Naive thymus-derived CD4-positive, alpha-beta T cell (primary cell): ENCODE measurements at regions of chr4 and their contacts with region 1.

Region 1: DNA sequence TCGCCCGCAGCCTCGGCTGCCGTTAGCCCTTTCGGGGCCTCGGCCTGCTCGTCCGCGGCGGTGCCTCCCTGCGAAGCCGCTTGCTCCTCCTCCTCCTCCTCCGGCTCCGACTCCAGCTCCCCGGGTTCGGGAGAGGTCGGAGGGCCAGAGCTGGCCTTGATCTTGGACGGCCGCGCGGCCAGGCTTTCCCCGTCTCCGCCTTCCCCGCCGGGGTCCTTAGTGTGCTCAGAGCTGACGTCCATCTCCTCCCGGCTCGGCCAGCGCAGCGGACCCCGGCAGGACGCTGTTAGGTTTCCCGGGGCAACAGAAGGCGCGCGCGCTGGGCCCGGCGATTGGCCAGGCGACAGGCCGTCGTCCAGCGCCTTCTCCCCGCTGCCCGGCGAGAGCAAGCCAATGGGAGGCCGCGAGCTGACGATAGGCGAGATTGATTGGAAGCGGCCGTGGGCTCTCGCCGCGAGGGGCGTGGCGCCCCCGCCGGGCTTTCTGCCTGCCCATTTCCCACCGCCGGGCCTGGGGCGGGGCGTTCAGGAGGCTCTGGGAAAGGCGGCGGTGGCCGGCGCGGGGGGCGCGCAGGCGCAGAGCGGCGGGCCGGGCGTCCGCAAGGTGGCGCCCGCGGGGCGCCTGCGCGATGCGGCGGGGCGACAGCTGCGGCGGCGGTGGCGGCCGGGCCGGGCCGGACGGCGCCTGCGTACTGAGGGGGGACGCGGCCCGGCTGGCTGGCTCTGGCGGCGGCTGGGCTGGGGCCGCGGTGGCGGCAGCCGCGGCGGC is at the start of gene TADA2B:
- DNase-seq: peak; percentile 79 to 99 (median 88)
- ATAC-seq: peak; percentile 89
- H3K4me3 ChIP-seq: peak within 1 kb of the TSS; percentile 84
- H3K4me3 Mint-ChIP-seq: peak within 1 kb of the TSS; percentile 90 to 95 (median 92)
- H3K27ac ChIP-seq: peak within 1 kb of the TSS; percentile 85
- H3K27ac Mint-ChIP-seq: peak within 1 kb of the TSS; percentile 80 to 92 (median 89)
- H3K4me1 ChIP-seq: peaks cover 33 to 40% of the 10 kb centered on the region in 2 donors
- H3K4me1 Mint-ChIP-seq: peaks cover 38 to 58% (median 52%) of the 10 kb centered on the region in 7 donors
- H3K27me3 ChIP-seq: no peaks in the 10 kb centered on the region
- H3K27me3 Mint-ChIP-seq: peaks cover 0 to 15% (median 0%) of the 10 kb centered on the region in 5 donors
- total RNA-seq, gene TADA2B: 26.8 to 49.0 (median 41.5) TPM

Region 2: DNA sequence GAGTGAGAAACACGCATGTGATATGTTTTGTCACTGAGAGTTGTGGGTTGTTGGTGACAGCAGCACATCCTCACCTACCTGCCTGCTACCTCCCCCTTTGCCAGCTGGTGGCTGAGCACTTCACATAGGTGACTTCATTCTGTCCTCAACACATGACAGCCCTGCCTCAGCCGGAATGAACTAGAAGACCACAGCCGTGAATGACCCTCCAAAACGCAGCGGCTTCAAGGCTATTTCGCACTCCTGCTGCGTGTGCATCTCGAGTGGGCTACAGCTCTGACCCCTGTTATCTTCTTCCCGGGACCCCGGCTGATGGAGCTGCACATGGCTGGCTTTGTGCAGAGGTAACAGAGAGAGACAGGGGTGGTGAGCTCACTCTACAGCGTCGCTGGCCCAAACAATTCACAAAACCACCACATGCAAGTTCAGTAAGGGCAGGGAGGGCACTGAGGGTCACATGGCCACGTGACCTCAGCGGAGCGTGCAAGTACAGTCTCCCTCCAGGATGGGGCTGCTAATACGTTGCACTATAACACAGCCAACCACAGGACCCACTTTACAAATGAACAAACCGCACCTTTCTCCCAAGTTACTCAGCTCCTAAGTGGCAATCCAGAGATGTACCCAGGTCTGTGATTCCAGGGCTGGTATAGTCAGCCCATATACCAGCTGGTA is 564.2 kb before region 1 on chr4:
- CTCF ChIA-PET with region 1: no interaction called
- POLR2A ChIA-PET with region 1: no interaction called
- intact Hi-C with region 1: no loop called
- DNase-seq: no peak
- ATAC-seq: no peak
- H3K4me3 ChIP-seq: no peak overlapping the region
- H3K4me3 Mint-ChIP-seq: no peak overlapping the region
- H3K27ac ChIP-seq: no peak overlapping the region
- H3K27ac Mint-ChIP-seq: no peak overlapping the region
- H3K4me1 ChIP-seq: no peaks in the 10 kb centered on the region
- H3K4me1 Mint-ChIP-seq: no peaks in the 10 kb centered on the region
- H3K27me3 ChIP-seq: no peaks in the 10 kb centered on the region
- H3K27me3 Mint-ChIP-seq: peaks cover 25 to 57% (median 47%) of the 10 kb centered on the region in 5 donors

Region 3: DNA sequence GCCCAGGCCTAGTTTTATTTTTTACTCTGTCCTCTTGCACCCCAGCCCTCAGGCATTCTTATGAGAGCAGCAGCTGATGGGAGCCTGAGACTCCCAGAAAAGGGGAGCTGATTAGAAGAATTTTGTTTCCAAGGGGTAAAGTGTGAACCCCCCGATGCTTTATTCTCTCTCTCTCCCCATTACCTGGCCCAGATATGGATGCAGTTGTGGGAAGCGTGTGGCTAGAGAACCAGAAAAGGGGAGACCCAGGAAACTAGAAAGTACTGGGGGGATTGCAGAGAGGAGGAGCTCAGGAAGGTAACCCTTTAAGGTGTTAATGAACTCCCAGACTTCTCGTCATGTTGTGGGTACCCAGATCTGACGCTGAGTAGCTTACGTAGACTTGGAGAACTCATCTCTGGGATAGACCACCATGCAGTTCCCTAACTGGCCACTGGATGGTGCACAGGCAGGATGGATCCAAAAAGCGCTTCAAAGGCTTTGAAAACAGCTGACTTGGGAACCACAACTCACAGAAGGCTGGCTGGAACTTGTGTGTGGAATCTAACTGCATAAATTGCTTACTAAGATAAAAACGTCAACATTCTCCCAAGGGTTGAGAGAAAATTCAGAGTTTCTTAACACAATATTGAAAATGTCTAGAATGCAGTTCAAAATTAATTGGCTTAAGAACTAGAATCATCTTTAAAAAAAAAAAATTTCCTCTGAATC is 68.6 kb before region 1 on chr4:
- CTCF ChIA-PET with region 1: interaction called, 3 read pairs
- POLR2A ChIA-PET with region 1: no interaction called
- intact Hi-C with region 1: loop called in 1 of 2 experiments (anchors 1 kb)
- DNase-seq: peak; percentile 55 to 82 (median 74)
- ATAC-seq: peak; percentile 100
- H3K4me3 ChIP-seq: no peak overlapping the region
- H3K4me3 Mint-ChIP-seq: peak overlapping the region in 3 of 10 donors; percentile 11 to 45 (median 18)
- H3K27ac ChIP-seq: no peak overlapping the region
- H3K27ac Mint-ChIP-seq: peak overlapping the region in 5 of 9 donors; percentile 43 to 86 (median 69)
- H3K4me1 ChIP-seq: peaks cover 0 to 9% of the 10 kb centered on the region in 2 donors
- H3K4me1 Mint-ChIP-seq: peaks cover 5 to 38% (median 22%) of the 10 kb centered on the region in 7 donors
- H3K27me3 ChIP-seq: no peaks in the 10 kb centered on the region
- H3K27me3 Mint-ChIP-seq: no peaks in the 10 kb centered on the region

Region 4: DNA sequence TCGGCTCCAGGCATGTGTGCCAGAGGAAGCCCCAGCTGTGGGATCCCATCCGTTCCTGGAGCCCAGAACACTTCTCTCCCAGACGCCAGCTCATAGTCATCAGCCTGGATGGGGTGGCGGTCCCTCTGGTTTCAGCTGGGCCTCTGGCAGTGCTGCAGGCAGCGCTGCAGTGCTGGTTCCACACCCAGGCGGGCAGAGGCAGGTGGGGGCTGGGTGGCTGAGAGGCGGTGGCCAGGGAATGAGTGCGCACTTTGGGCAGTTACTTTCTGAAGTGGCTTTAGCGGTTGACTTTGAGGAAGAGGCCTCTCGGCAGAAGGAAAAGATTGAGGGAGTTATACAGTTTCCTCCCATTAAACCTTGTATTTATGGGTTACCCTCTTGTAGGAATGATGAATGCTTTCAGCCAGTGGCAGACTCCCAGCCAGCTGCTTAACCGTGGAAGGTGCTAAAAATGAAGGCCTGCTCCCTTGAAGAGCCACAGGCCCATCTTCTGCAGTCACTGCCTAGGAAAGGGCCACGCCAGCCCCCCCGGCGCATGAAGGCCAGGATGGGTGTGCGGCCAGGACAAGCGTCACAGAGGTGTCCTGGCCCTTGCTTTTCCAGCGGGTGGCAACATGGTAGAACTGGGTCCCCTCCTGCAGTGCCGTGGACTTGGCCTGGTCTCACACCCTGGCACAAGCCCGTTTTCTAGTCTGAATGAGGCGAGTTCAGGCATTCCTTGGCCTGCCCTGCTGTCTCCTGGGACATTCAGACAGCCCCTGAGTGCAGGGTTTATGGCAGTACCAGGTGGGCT is 10.2 kb after region 1 on chr4:
- CTCF ChIA-PET with region 1: interaction called, 3 read pairs
- POLR2A ChIA-PET with region 1: interaction called, 15 read pairs
- intact Hi-C with region 1: no loop called
- DNase-seq: no peak
- ATAC-seq: peak; percentile 83
- H3K4me3 ChIP-seq: no peak overlapping the region
- H3K4me3 Mint-ChIP-seq: peak overlapping the region in 6 of 10 donors; percentile 15 to 60 (median 32)
- H3K27ac ChIP-seq: peak overlapping the region; percentile 40
- H3K27ac Mint-ChIP-seq: peak overlapping the region in 8 of 9 donors; percentile 38 to 78 (median 67)
- H3K4me1 ChIP-seq: peaks cover 0 to 15% of the 10 kb centered on the region in 2 donors
- H3K4me1 Mint-ChIP-seq: peaks cover 19 to 46% (median 33%) of the 10 kb centered on the region in 7 donors
- H3K27me3 ChIP-seq: no peaks in the 10 kb centered on the region
- H3K27me3 Mint-ChIP-seq: no peaks in the 10 kb centered on the region

Region 5: DNA sequence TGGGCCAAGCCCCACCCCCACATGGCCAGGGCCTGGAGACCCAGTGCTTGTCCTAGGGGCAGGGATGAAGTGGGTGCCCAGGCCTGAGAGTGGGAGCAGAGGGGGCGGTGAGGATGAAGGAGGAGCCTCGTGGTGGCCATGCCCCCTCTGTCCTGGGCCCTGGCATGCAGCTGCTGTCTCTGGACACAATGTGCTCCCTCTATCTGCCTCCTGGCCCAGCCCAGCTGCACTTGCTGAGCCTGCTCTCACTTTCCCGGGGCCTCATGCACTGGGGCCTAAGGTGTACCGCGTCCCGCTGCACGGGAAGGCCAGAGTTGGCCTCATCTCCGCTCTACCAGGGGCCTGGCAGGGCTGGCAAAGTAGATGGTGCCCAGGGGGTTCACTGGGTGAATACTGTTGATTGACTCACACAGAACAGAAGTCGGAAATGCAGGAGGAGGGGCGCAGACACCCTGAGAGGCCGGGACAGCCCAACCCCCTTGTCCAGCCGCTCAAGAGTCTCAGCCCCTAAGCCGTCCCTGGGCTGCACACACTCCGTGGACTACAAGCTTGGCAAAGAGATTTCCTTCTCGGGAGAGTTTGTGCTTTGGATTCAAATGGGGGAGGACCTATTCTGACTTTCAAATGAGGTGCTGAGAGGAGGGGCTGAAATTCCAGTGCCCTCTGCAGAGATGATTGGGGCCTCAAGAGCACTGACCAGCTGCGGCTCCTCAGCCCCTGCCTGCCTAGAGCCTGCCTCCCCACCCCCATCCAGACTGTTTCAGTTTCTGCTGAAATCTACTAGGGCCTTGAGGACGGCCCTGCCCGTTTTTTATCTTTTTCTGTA is 279.5 kb after region 1 on chr4:
- CTCF ChIA-PET with region 1: no interaction called
- POLR2A ChIA-PET with region 1: no interaction called
- intact Hi-C with region 1: no loop called
- DNase-seq: no peak
- ATAC-seq: no peak
- H3K4me3 ChIP-seq: no peak overlapping the region
- H3K4me3 Mint-ChIP-seq: no peak overlapping the region
- H3K27ac ChIP-seq: no peak overlapping the region
- H3K27ac Mint-ChIP-seq: no peak overlapping the region
- H3K4me1 ChIP-seq: peaks cover 0 to 18% of the 10 kb centered on the region in 2 donors
- H3K4me1 Mint-ChIP-seq: peaks cover 0 to 7% (median 0%) of the 10 kb centered on the region in 7 donors
- H3K27me3 ChIP-seq: no peaks in the 10 kb centered on the region
- H3K27me3 Mint-ChIP-seq: peaks cover 0 to 21% (median 10%) of the 10 kb centered on the region in 5 donors